Activated CD4-positive, alpha-beta T cell treated with anti-CD3 and anti-CD28 coated beads for 36 hours (primary cell): ENCODE measurements at regions of chr11 and their contacts with region 1.

Region 1: DNA sequence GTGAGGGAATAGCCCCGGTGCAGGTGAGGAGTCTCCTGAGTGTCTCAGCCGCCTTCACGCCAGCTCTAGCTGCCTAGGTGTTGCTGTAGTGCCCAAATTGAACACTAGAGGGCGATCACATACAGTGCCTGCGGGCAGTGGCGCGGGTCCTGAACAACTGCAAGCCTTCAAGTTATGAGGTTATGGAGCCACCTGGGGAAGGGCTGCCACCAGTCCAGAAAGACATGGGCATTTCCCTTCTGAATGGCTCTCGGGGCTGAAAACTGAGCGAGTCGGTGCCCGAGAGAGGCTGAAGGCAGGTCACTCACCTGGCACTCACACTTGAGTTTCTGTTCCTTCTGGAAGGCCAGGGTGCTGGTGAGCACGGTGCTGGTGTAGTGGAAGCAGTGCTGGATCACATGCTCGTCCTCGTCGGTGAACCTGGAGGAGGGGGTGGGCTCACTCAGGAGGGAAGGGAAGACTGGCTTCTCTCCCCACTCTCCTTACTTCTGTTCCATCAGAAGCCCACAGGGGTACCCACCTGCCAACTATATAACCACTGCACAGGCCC is 88.4 kb downstream of the PDE2A start:
- DNase-seq: peak; percentile 84
- ATAC-seq: peak; percentile 84
- H3K4me3 Mint-ChIP-seq: peak overlapping the region; percentile 66
- H3K27ac Mint-ChIP-seq: no peak overlapping the region
- H3K4me1 Mint-ChIP-seq: peaks cover 23% of the 10 kb centered on the region
- H3K27me3 Mint-ChIP-seq: peaks cover 30% of the 10 kb centered on the region

Region 2: DNA sequence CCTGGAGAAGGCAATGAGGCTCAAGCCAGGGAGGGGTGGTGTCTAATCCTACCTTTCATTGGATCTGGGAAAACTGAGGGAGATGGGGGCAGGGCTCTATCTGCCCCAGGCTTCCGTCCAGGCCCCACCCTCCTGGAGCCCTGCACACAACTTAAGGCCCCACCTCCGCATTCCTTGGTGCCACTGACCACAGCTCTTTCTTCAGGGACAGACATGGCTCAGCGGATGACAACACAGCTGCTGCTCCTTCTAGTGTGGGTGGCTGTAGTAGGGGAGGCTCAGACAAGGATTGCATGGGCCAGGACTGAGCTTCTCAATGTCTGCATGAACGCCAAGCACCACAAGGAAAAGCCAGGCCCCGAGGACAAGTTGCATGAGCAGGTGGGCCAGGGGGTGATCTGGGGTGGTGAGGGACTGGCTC is 393.9 kb before region 1 on chr11 and contains the start of gene FOLR1:
- CTCF ChIA-PET with region 1: no interaction called
- POLR2A ChIA-PET with region 1: no interaction called
- intact Hi-C with region 1: no loop called
- DNase-seq: no peak
- ATAC-seq: no peak
- H3K4me3 Mint-ChIP-seq: no peak within 1 kb of the TSS
- H3K27ac Mint-ChIP-seq: no peak within 1 kb of the TSS
- H3K4me1 Mint-ChIP-seq: no peaks in the 10 kb centered on the region
- H3K27me3 Mint-ChIP-seq: no peaks in the 10 kb centered on the region
- total RNA-seq, gene FOLR1: not detected

Region 3: GRCh38 chr11:72629266-72629665 is 43.4 kb after region 1 on chr11:
- CTCF ChIA-PET with region 1: interaction called, 10 read pairs
- POLR2A ChIA-PET with region 1: no interaction called
- intact Hi-C with region 1: no loop called
- DNase-seq: no peak
- ATAC-seq: no peak
- H3K4me3 Mint-ChIP-seq: no peak overlapping the region
- H3K27ac Mint-ChIP-seq: no peak overlapping the region
- H3K4me1 Mint-ChIP-seq: no peaks in the 10 kb centered on the region
- H3K27me3 Mint-ChIP-seq: no peaks in the 10 kb centered on the region

Region 4: DNA sequence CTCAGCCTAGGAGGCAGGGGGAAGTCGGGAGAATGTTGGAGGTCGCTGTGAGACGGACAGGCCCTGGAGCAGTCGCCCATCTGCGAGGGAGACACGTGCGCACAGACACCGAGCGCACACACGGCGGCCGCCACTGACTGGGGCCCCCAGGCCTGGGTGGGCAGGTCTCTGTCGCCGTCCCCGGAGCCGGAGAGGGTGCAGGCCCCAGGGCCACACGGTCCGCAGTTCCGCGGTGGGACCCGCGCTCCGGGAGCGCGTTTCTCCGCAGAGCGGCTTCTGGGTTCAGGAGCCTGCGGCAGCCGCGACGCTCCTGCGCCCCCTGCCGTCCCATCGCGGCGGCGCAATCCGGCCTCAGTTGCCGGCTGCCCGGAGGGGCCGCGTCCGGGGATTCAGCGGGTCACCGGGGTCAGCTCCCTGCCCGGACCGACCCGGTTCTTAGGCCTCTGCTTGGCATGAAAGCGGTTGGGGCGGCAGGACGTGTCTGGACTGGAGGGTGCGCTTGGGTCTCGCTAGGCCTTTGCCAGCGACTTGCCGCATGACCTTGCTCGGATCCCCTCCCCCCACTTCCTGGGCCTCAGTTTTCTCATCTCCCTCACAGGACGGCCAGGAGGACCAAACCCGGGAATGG is 57.2 kb after region 1 on chr11:
- CTCF ChIA-PET with region 1: interaction called, 8 read pairs
- POLR2A ChIA-PET with region 1: no interaction called
- intact Hi-C with region 1: loop called (anchors 1 kb)
- DNase-seq: peak; percentile 79
- ATAC-seq: peak; percentile 88
- H3K4me3 Mint-ChIP-seq: no peak overlapping the region
- H3K27ac Mint-ChIP-seq: no peak overlapping the region
- H3K4me1 Mint-ChIP-seq: no peaks in the 10 kb centered on the region
- H3K27me3 Mint-ChIP-seq: peaks cover 4% of the 10 kb centered on the region

Region 5: DNA sequence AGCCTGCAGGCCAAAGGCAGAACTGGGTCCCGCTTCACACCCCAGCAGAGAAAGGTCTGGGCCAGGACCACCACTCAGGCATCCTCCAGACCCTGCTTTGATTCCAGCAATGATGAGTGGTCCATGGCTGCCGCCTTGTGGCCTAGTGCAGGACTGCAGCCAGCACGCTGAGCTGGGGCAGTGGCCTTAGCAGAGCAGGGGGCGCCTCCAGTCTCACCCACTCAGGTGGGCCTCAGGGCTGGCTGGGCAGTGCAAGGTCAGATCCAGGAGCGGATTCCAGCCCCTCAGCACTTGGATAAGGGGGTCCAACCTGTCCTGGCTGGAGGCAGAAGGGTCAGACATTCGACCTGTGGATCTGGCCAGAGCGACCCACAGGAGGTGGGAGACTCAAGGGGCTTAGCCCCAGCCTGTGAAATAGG is 98.0 kb after region 1 on chr11:
- CTCF ChIA-PET with region 1: interaction called, 74 read pairs
- POLR2A ChIA-PET with region 1: no interaction called
- intact Hi-C with region 1: loop called (anchors 1 to 2 kb)
- DNase-seq: peak; percentile 83
- ATAC-seq: peak; percentile 60
- H3K4me3 Mint-ChIP-seq: no peak overlapping the region
- H3K27ac Mint-ChIP-seq: no peak overlapping the region
- H3K4me1 Mint-ChIP-seq: peaks cover 15% of the 10 kb centered on the region
- H3K27me3 Mint-ChIP-seq: no peaks in the 10 kb centered on the region

Region 6: GRCh38 chr11:72848846-72849466 is 263.1 kb after region 1 on chr11:
- CTCF ChIA-PET with region 1: no interaction called
- POLR2A ChIA-PET with region 1: no interaction called
- intact Hi-C with region 1: loop called in 1 of 2 experiments (anchors 10 kb)
- DNase-seq: peak; percentile 62
- ATAC-seq: peak; percentile 71
- H3K4me3 Mint-ChIP-seq: no peak overlapping the region
- H3K27ac Mint-ChIP-seq: no peak overlapping the region
- H3K4me1 Mint-ChIP-seq: peaks cover 3% of the 10 kb centered on the region
- H3K27me3 Mint-ChIP-seq: no peaks in the 10 kb centered on the region

Region 7: GRCh38 chr11:73252577-73253195 is 666.8 kb after region 1 on chr11:
- CTCF ChIA-PET with region 1: no interaction called
- POLR2A ChIA-PET with region 1: no interaction called
- intact Hi-C with region 1: no loop called
- DNase-seq: peak; percentile 45
- ATAC-seq: peak; percentile 71
- H3K4me3 Mint-ChIP-seq: no peak overlapping the region
- H3K27ac Mint-ChIP-seq: no peak overlapping the region
- H3K4me1 Mint-ChIP-seq: no peaks in the 10 kb centered on the region
- H3K27me3 Mint-ChIP-seq: no peaks in the 10 kb centered on the region